Activated CD4-positive, alpha-beta memory T cell treated with anti-CD3 and anti-CD28 coated beads, Interleukin-2, amount 10 ng/mL, durations not matched to agents 7 days and 5 days (primary cell): ENCODE measurements at regions of chr1 and their contacts with region 1.

Region 1: DNA sequence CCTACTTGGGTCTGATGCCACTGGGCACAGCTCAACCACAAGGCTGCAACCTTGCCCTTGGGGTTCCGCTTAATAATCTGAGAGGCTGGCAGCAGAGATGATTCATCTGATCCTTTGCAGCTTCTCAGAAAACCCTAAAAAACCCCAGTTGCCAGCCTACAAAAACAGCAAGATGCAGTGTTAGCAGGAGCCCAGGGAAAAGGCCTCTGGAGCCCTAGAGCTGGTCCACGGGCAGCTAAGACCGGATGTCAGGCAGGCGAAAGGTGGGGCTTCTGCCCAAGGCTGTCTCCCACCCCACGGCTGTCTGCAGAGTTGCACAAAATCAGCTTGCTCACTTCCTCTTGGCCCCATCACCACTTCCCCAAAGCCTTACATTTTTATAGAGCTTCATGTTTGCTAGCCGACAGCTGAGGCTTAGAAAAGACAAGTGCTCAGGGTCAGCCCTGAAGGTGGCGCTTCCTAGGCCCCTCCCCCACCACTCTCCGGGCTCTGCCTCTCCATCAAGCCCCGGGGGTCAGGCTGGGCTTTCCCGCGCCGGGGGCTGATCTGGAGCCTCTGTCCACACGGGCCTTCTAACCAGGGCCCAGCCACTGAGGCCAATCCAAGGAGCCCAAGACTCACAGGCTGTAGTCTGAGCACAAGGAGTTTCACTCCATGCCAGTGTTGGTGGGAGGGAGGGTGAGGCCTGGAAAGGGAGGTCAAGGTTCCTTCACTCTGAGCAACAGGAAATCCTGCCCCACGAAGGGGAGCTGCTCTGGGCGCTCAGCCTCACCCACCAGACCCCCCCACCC is 4.2 kb upstream of the ADORA3 start:
- DNase-seq: peak; percentile 86
- H3K4me3 Mint-ChIP-seq: peak overlapping the region; percentile 65
- H3K27ac Mint-ChIP-seq: peak overlapping the region; percentile 89
- H3K4me1 Mint-ChIP-seq: peaks cover 56% of the 10 kb centered on the region
- H3K27me3 Mint-ChIP-seq: no peaks in the 10 kb centered on the region

Region 2: DNA sequence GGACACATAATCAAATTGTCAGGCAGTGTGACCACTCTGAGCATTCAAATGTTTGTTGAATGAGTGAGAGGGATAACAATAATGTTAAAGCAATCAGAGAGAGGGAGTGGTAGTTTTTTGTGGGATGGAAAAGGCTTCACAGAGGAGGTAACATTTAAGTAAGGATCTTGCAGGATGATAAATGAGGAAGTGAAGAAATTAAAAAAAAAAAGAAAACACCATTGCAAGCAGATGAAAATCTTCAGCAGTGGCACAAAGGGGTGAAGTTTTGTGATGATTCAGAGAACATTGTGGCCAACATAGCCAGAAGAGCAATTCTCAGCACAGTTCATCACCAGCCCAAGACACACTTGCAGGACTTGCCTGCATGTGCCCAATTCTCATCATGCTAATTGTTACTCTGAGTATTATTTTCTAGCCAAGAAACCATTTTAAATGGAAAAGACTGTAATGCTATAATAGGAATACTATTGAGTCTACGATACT is 115.1 kb before region 1 on chr1:
- CTCF ChIA-PET with region 1: no interaction called
- POLR2A ChIA-PET with region 1: no interaction called
- DNase-seq: no peak
- H3K4me3 Mint-ChIP-seq: no peak overlapping the region
- H3K27ac Mint-ChIP-seq: no peak overlapping the region
- H3K4me1 Mint-ChIP-seq: no peaks in the 10 kb centered on the region
- H3K27me3 Mint-ChIP-seq: peaks cover 36% of the 10 kb centered on the region

Region 3: DNA sequence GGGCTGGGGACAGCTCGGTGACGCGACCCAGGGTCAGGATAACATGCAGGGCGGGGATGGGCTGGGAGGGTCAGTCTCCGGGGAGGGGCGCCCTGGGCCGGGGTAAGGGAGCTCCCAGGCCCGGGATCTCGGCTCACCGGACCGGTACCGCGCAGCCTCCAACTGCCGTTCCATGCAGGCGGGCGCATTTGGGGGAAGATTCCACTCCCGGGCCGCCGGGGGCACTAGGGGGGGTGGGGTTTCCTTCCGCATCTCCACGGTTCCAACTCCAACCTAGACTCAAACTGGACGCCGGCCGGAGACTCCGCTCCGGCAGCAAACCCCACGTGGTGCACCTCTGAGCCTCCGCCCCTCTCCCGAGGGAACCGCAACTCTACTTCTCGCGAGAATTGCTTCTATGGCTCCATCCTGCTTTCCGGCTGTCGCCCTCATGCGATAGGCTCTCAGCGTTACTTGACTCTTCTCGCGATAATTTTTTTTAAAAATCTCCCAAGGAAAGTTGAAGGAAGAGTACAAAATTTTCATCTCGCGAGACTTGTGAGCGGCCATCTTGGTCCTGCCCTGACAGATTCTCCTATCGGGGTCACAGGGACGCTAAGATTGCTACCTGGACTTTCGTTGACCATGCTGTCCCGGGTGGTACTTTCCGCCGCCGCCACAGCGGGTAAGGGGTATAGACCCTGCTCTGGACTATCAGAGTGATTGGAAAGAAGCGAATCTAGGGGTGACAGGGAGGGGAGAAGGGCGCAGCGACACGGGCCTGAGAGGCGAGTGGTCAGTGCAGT is 58.5 kb before region 1 on chr1 and contains the starts of genes ATP5PB and WDR77:
- CTCF ChIA-PET with region 1: interaction called, 28 read pairs
- POLR2A ChIA-PET with region 1: interaction called, 61 read pairs
- DNase-seq: peak; percentile 94
- H3K4me3 Mint-ChIP-seq: peak within 1 kb of the TSS; percentile 100
- H3K27ac Mint-ChIP-seq: peak within 1 kb of the TSS; percentile 95
- H3K4me1 Mint-ChIP-seq: peaks cover 75% of the 10 kb centered on the region
- H3K27me3 Mint-ChIP-seq: no peaks in the 10 kb centered on the region
- total RNA-seq, gene ATP5PB: 272 to 286 TPM
- total RNA-seq, gene WDR77: 26.3 to 28.4 TPM

Region 4: GRCh38 chr1:111592389-111593361 is 85.1 kb after region 1 on chr1:
- CTCF ChIA-PET with region 1: interaction called, 73 read pairs
- POLR2A ChIA-PET with region 1: interaction called, 128 read pairs
- DNase-seq: peak; percentile 97
- H3K4me3 Mint-ChIP-seq: peak overlapping the region; percentile 57
- H3K27ac Mint-ChIP-seq: peak overlapping the region; percentile 82
- H3K4me1 Mint-ChIP-seq: peaks cover 73% of the 10 kb centered on the region
- H3K27me3 Mint-ChIP-seq: no peaks in the 10 kb centered on the region

Region 5: GRCh38 chr1:111628153-111628552 is 120.5 kb after region 1 on chr1:
- CTCF ChIA-PET with region 1: interaction called, 85 read pairs
- POLR2A ChIA-PET with region 1: interaction called, 141 read pairs
- DNase-seq: no peak
- H3K4me3 Mint-ChIP-seq: peak overlapping the region; percentile 42
- H3K27ac Mint-ChIP-seq: peak overlapping the region; percentile 70
- H3K4me1 Mint-ChIP-seq: peaks cover 82% of the 10 kb centered on the region
- H3K27me3 Mint-ChIP-seq: no peaks in the 10 kb centered on the region

Region 6: GRCh38 chr1:111666841-111667270 is 159.2 kb after region 1 on chr1:
- CTCF ChIA-PET with region 1: interaction called, 17 read pairs
- POLR2A ChIA-PET with region 1: interaction called, 14 read pairs
- DNase-seq: no peak
- H3K4me3 Mint-ChIP-seq: no peak overlapping the region
- H3K27ac Mint-ChIP-seq: no peak overlapping the region
- H3K4me1 Mint-ChIP-seq: peaks cover 64% of the 10 kb centered on the region
- H3K27me3 Mint-ChIP-seq: no peaks in the 10 kb centered on the region

Region 7: GRCh38 chr1:111719674-111720132 is 212.1 kb after region 1 on chr1:
- CTCF ChIA-PET with region 1: interaction called, 62 read pairs
- POLR2A ChIA-PET with region 1: interaction called, 29 read pairs
- DNase-seq: no peak
- H3K4me3 Mint-ChIP-seq: no peak overlapping the region
- H3K27ac Mint-ChIP-seq: no peak overlapping the region
- H3K4me1 Mint-ChIP-seq: peaks cover 22% of the 10 kb centered on the region
- H3K27me3 Mint-ChIP-seq: no peaks in the 10 kb centered on the region

Region 8: DNA sequence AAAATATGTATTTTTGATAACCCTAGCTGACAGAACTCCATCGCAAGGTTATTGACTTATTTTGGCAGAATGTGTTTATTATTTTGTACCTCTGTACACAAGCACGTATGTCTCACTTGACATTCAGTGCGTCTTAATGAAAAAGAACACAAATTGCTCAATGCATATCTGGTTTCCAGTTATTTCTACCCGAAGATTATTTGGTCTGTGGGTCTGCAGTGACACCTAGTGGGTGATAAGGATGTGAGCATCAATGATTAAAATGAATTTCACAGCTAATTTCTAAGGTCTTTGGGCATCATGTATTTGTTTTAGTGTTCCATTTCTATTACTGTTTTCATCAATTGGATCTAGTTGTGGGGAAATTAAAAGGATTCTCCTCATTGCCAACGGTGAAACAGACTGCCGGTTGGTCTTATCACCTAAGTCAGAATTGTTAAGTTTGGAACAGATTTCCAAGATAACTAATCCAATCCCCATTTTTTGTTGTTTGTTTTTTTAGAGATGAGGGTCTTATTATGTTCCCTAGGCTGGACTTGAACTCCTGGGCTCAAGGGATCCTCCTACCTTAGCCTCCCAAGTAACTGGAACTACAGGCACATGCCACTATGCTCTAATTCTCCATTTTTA is 262.0 kb after region 1 on chr1:
- CTCF ChIA-PET with region 1: interaction called, 27 read pairs
- POLR2A ChIA-PET with region 1: interaction called, 7 read pairs
- DNase-seq: peak; percentile 54
- H3K4me3 Mint-ChIP-seq: no peak overlapping the region
- H3K27ac Mint-ChIP-seq: no peak overlapping the region
- H3K4me1 Mint-ChIP-seq: peaks cover 2% of the 10 kb centered on the region
- H3K27me3 Mint-ChIP-seq: no peaks in the 10 kb centered on the region